Sigmoid colon (tissue), 7 donors: ENCODE measurements at regions of chr6 and their contacts with region 1.

Region 1: DNA sequence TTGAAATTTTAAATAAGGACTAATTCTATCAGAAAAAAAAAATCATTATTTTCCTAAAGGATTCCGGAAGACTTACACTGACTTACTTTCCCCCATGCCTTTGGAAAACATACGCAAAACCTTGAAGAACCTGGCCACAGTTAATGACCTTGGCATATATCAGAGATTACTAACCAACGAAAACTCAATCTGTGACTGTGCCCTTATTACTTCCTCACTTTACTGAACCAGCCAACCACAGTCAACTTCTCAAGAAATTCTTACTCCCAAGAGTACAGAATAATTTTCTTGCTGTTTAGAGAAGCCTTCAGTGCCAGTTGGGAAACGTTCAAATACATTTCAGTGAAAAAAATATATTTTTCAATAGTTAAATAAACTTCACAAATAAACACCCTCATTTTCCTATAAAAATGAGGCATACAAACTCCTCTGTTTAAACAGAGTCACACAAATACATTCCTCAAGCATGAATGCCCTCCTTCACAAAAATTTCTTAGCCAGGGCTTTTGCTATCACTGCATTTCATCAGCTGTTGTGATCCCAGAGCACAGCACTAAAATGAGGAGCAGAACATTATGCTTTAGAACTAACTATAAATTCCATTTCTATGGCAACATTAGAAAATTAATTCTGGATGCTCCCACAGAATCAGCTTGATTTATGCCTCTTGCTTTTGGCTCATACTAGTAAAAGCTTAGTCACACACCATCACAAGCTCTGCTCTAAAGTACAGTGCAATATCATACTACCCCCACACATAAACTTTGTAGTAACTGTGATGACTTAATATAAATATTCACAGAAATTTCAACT is 117.6 kb downstream of the DST start:
- DNase-seq: no peak
- H3K4me3 ChIP-seq: peak overlapping the region in 1 of 4 donors; percentile 1
- H3K27ac ChIP-seq: peak overlapping the region; percentile 76 to 96 (median 88)
- H3K4me1 ChIP-seq: peaks cover 0 to 99% (median 74%) of the 10 kb centered on the region in 4 donors
- H3K27me3 ChIP-seq: no peaks in the 10 kb centered on the region
- CTCF ChIP-seq: no peak
- EP300 ChIP-seq: peak in 3 of 4 donors; percentile 27 to 79 (median 59)
- POLR2A ChIP-seq: no peak

Region 2: DNA sequence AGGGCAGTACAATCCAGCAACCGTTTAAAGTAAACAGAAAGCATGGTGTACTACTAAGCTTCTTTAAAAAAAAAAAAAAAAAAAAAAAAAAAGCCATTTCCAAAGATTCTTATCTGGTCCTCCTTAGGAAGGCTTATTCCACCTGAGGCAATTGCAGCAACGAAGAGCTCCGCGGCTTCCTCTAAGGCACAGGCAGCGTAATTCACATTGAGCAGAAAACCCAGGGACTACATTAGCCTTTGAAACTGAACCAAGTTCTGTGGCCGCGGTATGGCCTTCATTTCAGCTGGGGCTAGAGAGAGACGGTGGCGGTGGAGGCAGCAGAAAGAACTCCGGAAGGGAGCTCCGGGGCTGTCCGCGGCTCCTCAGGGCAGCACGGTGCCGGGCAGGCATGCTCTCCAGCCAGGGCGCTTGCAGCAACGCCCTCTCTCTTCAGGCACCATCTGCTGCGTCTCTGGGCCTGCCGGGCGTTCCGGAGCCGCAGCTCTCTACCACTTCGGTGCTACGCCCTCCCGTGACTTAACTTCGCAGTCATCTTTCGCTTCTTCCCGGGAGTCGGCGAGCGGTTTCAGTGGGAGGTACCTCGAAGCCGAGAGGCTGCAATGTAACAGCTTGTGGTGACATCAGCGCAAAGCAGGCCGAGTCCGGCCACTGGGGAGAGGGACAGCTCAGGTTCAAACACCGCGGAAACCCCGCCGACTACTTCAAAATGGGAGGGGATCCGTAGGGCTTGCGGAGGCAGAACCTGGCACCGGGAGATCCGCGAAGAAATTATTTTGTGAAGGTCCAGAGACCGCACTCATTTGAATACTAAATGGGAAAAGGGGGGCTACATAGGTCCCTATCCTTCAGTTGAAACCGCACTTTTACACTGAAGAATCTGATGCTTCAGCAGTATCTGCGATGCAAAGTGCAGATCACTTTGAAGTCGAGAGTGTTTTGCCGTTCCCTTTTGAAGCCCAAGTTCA is 17.6 kb after region 1 on chr6:
- intact Hi-C with region 1: loop called (anchors 2 kb)
- DNase-seq: peak; percentile 99
- H3K4me3 ChIP-seq: peak overlapping the region; percentile 56 to 71 (median 68)
- H3K27ac ChIP-seq: peak overlapping the region; percentile 92 to 96 (median 94)
- H3K4me1 ChIP-seq: peaks cover 0 to 50% (median 37%) of the 10 kb centered on the region in 4 donors
- H3K27me3 ChIP-seq: no peaks in the 10 kb centered on the region
- CTCF ChIP-seq: peak in 2 of 4 experiments; percentile 24 to 29
- EP300 ChIP-seq: peak in 1 of 4 donors; percentile 60
- POLR2A ChIP-seq: peak; percentile 84 to 91

Region 3: GRCh38 chr6:56570413-56571359 is 45.6 kb after region 1 on chr6:
- intact Hi-C with region 1: no loop called
- DNase-seq: no peak
- H3K4me3 ChIP-seq: no peak overlapping the region
- H3K27ac ChIP-seq: peak overlapping the region in 2 of 4 donors; percentile 47 to 69
- H3K4me1 ChIP-seq: peaks cover 0 to 55% (median 29%) of the 10 kb centered on the region in 4 donors
- H3K27me3 ChIP-seq: no peaks in the 10 kb centered on the region
- CTCF ChIP-seq: peak; percentile 24 to 56 (median 46)
- EP300 ChIP-seq: no peak
- POLR2A ChIP-seq: no peak

Region 4: GRCh38 chr6:56708810-56709597 is 183.9 kb after region 1 on chr6:
- intact Hi-C with region 1: loop called (anchors 10 kb)
- DNase-seq: no peak
- H3K4me3 ChIP-seq: no peak overlapping the region
- H3K27ac ChIP-seq: peak overlapping the region; percentile 4 to 74 (median 72)
- H3K4me1 ChIP-seq: peaks cover 0 to 76% (median 46%) of the 10 kb centered on the region in 4 donors
- H3K27me3 ChIP-seq: no peaks in the 10 kb centered on the region
- CTCF ChIP-seq: peak; percentile 19 to 65 (median 49)
- EP300 ChIP-seq: no peak
- POLR2A ChIP-seq: no peak

Region 5: GRCh38 chr6:56808871-56809359 is 283.8 kb after region 1 on chr6:
- intact Hi-C with region 1: no loop called
- DNase-seq: no peak
- H3K4me3 ChIP-seq: no peak overlapping the region
- H3K27ac ChIP-seq: no peak overlapping the region
- H3K4me1 ChIP-seq: peaks cover 0 to 50% (median 38%) of the 10 kb centered on the region in 4 donors
- H3K27me3 ChIP-seq: no peaks in the 10 kb centered on the region
- CTCF ChIP-seq: no peak
- EP300 ChIP-seq: no peak
- POLR2A ChIP-seq: no peak